ENCODE measurements at regions of chr22 and their contacts with region 1.

Region 1: GRCh38 chr22:24951942-24952836 is at the start of gene KIAA1671:
- DNase-seq: peak; percentile 67 to 91
- H3K4me3 ChIP-seq: peak within 1 kb of the TSS; percentile 91
- H3K27ac ChIP-seq: peak within 1 kb of the TSS; percentile 87
- H3K4me1 ChIP-seq: peaks cover 16% of the 10 kb centered on the region
- H3K27me3 ChIP-seq: no peaks in the 10 kb centered on the region
- CTCF ChIP-seq: peak; percentile 99
- total RNA-seq, gene KIAA1671: 44.3 and 47.7 TPM in 2 replicates

Region 2: DNA sequence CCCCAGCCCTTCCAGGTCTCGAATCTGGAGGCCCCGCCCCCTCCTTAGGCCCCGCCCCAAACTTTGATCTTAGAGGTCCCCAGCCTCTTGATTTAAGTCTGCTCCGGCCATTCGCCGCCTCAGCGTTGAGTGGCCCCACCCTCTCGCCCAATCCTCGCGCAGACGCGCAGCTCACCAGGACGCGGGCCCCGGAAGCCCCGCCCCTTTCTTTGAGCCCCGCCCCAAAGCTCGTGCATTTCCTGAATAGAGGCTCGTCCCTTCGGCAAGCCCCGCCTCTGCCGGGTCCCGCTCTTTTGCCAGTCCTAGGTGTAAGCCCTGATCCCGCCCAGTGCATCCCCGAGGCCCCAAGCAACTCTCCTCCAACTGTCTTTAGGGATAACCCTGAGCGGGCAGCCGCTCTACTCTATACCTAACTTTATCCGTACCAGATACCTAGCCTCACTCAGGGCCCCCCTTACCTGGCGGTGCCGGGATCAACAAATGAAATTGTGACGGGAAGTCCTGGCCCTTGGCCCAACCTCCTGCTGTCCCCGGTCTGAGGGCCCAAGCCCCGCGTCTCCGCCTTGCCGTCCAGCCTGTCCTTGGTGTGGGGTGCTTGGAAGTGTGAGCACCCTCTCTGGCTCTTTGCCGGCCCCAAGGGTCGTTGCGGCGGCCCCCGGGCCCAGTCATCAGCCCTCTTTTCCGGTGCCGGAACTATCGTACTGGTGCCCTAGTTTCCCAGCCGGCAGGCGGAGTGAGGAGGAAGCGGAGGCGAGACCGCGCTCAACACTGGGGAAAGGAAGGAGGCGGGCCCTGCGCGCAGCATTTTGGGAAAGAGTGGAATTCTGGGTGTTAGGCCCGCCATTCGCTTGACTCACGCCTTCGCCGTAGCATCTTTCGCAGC is 396.8 kb before region 1 on chr22 and contains the start of gene SNRPD3:
- CTCF ChIA-PET with region 1: no interaction called
- POLR2A ChIA-PET with region 1: no interaction called
- intact Hi-C with region 1: no loop called
- DNase-seq: peak; percentile 94 to 95
- H3K4me3 ChIP-seq: peak within 1 kb of the TSS; percentile 100
- H3K27ac ChIP-seq: peak within 1 kb of the TSS; percentile 75
- H3K4me1 ChIP-seq: peaks cover 20% of the 10 kb centered on the region
- H3K27me3 ChIP-seq: no peaks in the 10 kb centered on the region
- CTCF ChIP-seq: no peak; the same call in 1 of the 2 replicates
- total RNA-seq, gene SNRPD3: 77.1 and 117 TPM in 2 replicates

Region 3: GRCh38 chr22:24894220-24894975 is 57.8 kb before region 1 on chr22:
- CTCF ChIA-PET with region 1: interaction called, 18 read pairs
- POLR2A ChIA-PET with region 1: no interaction called
- intact Hi-C with region 1: no loop called
- DNase-seq: peak; percentile 81 to 99
- H3K4me3 ChIP-seq: peak overlapping the region; percentile 23; the same call in 1 of the 2 replicates
- H3K27ac ChIP-seq: peak overlapping the region; percentile 59
- H3K4me1 ChIP-seq: peaks cover 15% of the 10 kb centered on the region
- H3K27me3 ChIP-seq: no peaks in the 10 kb centered on the region
- CTCF ChIP-seq: no peak

Region 4: GRCh38 chr22:24969560-24970301 is 17.5 kb after region 1 on chr22:
- CTCF ChIA-PET with region 1: no interaction called
- POLR2A ChIA-PET with region 1: no interaction called
- intact Hi-C with region 1: no loop called
- DNase-seq: peak; percentile 75 to 88
- H3K4me3 ChIP-seq: no peak overlapping the region; the same call in 1 of the 2 replicates
- H3K27ac ChIP-seq: peak overlapping the region; percentile 78
- H3K4me1 ChIP-seq: peaks cover 60% of the 10 kb centered on the region
- H3K27me3 ChIP-seq: no peaks in the 10 kb centered on the region
- CTCF ChIP-seq: no peak

Region 5: DNA sequence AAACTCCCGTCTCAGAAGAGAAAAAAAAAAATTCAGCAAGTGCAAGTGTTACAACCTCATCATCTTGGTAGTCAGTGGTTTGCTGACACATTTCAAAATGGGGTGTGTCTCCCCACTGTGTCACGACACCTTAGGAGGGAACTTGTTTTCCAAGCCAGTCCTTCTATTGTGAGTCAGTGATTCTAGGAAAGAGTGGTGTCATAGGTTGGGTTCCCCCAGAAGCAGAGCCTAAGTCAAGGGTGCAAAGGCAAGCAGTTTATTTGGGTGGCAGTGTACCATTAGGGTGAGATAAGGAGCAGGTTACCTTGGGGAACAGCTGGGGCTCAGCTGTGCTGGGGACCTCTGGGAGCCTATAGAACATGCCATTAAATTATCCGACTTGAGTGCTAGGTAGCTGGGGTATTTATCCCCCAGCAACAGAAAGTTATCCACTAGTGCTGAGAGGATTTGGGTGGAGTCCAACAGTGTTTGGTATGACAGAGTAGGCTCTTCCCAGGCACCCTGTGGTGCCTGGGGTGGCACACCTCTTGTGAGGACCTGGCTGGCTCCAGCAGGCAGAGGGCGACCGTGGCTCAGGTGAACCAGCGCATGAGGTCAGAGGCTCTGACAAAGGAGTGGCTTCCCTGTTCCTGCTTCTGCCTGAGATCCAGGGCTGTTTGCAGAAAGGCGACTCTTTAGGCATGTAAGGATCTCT is 42.0 kb after region 1 on chr22:
- CTCF ChIA-PET with region 1: no interaction called
- POLR2A ChIA-PET with region 1: interaction called, 3 read pairs
- intact Hi-C with region 1: loop called (anchors 1 kb)
- DNase-seq: peak; percentile 75 to 97
- H3K4me3 ChIP-seq: no peak overlapping the region
- H3K27ac ChIP-seq: peak overlapping the region; percentile 96
- H3K4me1 ChIP-seq: peaks cover 75% of the 10 kb centered on the region
- H3K27me3 ChIP-seq: no peaks in the 10 kb centered on the region
- CTCF ChIP-seq: peak; percentile 65

Region 6: DNA sequence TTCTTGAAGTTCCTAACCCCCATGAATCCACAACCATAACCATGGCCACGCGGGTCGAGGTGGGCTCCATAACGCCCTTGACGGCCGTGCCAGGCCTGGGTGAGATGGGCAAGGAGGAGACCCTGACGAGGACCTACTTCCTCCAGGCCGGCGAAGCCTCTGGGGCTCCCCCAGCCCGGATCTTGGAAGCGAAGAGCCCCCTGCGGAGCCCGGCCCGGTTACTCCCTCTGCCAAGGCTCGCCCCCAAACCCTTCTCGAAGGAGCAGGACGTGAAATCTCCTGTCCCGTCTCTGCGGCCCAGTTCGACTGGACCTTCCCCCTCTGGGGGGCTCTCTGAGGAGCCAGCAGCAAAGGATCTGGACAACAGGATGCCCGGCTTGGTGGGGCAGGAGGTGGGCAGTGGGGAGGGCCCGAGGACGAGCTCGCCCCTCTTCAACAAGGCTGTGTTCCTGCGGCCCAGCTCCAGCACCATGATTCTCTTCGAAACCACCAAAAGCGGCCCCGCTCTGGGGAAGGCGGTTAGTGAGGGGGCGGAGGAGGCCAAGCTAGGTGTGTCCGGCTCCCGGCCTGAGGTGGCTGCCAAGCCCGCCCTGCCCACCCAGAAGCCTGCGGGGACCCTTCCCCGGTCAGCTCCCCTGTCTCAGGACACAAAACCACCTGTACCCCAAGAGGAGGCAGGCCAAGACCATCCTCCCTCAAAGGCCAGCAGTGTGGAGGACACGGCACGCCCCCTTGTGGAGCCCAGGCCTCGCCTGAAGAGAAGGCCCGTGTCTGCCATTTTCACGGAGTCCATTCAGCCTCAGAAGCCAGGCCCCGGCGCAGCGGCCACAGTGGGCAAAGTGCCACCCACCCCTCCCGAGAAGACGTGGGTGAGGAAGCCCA is 76.0 kb after region 1 on chr22:
- CTCF ChIA-PET with region 1: no interaction called
- POLR2A ChIA-PET with region 1: no interaction called
- intact Hi-C with region 1: loop called (anchors 1 kb)
- DNase-seq: no peak
- H3K4me3 ChIP-seq: no peak overlapping the region
- H3K27ac ChIP-seq: no peak overlapping the region
- H3K4me1 ChIP-seq: peaks cover 28% of the 10 kb centered on the region
- H3K27me3 ChIP-seq: no peaks in the 10 kb centered on the region
- CTCF ChIP-seq: peak; percentile 42

Region 7: DNA sequence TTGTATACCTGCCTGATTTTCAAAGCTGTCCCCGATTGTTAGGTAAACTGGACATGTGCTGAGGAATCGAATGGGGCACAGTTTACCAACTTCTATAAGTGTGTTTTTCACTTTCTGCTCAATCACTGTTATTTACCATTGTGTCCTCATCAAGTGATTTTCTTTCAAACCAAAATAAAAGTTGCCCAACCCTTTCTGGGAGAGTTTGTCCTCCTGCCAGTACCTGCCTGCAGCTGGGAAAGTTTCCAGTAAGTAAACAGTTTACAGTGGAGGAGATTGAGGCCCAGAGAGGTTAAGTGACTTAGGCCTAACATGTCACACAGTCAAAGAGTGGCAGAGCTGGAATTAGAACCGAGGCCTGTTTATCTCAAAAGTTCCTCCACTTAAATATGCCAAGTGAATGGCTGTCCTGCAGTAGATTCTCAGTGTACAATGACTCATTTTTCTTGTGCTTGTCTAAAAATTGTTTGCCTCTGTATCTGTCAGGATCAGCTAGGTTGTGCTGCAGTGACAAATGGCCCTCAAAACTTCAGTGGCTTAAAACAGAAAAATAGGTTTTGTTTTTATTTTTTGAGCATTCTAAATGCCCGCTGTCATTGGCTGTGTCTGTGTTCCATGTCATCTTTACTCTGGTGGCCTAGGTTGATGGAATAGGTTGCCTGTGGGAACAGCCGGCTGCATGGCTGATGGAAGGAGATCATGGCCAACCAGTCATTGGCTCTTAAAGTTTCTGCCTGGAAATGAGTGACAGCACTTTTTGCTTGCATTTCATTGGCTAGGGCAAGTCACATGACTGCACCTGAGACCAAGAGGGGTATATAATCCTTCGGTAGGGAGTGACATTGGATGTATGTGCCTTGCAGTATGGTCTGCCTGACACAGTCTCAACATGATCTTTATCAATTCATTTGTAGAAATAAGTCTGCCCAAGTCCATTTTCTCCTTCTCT is 185.7 kb after region 1 on chr22:
- CTCF ChIA-PET with region 1: no interaction called
- POLR2A ChIA-PET with region 1: no interaction called
- intact Hi-C with region 1: no loop called
- DNase-seq: no peak
- H3K4me3 ChIP-seq: no peak overlapping the region
- H3K27ac ChIP-seq: no peak overlapping the region
- H3K4me1 ChIP-seq: peaks cover 22% of the 10 kb centered on the region
- H3K27me3 ChIP-seq: no peaks in the 10 kb centered on the region
- CTCF ChIP-seq: no peak

Measured in PC-9 (cell line).